Activated CD4-positive, alpha-beta T cell treated with anti-CD3 and anti-CD28 coated beads, Interleukin-2, amount 10 ng/mL, durations not matched to agents 7 days and 5 days (primary cell): ENCODE measurements at regions of chr9 and their contacts with region 1.

Region 1: DNA sequence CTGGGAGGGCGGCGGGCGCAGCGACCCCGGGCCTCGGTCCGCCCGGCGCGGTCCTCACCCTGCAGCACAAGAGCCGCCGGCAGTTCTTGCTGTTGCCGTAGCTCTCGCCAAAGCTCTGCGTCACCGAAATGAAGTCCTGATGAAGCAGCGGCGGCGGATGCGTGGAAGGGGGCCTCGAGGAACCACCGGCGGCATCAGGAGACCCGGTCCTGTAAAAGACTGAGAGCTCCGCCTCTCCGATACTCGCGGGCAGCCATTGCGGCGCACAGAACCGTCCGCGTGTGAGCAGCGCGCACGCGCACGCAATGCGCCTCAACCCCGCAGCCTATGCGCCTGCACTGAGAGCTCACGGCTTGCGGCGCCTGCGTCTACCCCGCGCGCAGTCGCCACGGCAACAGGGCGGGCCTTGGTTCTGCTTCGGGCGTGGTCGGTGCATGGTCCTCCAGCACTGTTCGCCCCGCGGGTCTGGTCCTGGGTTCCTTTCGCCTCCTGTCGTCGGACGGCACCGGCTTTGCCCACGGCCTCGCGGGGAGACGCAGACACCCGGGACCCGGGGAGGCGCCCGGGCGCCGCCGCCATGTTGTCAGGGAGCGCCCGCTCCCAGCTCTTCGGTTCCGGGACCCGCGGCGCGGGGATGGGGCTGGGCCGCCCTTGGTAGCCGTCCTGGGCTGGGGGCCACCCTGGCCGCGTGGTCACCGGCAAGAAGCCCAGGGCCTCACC is 9.3 kb upstream of the GRIN1 start:
- DNase-seq: peak; percentile 91
- H3K4me3 Mint-ChIP-seq: peak overlapping the region; percentile 77
- H3K27ac Mint-ChIP-seq: peak overlapping the region; percentile 87
- H3K4me1 Mint-ChIP-seq: peaks cover 30% of the 10 kb centered on the region
- H3K27me3 Mint-ChIP-seq: peaks cover 5% of the 10 kb centered on the region

Region 2: GRCh38 chr9:137150617-137151457 is 21.2 kb after region 1 on chr9:
- CTCF ChIA-PET with region 1: interaction called, 10 read pairs
- POLR2A ChIA-PET with region 1: no interaction called
- DNase-seq: peak; percentile 40
- H3K4me3 Mint-ChIP-seq: no peak overlapping the region
- H3K27ac Mint-ChIP-seq: no peak overlapping the region
- H3K4me1 Mint-ChIP-seq: peaks cover 4% of the 10 kb centered on the region
- H3K27me3 Mint-ChIP-seq: peaks cover 5% of the 10 kb centered on the region

Region 3: DNA sequence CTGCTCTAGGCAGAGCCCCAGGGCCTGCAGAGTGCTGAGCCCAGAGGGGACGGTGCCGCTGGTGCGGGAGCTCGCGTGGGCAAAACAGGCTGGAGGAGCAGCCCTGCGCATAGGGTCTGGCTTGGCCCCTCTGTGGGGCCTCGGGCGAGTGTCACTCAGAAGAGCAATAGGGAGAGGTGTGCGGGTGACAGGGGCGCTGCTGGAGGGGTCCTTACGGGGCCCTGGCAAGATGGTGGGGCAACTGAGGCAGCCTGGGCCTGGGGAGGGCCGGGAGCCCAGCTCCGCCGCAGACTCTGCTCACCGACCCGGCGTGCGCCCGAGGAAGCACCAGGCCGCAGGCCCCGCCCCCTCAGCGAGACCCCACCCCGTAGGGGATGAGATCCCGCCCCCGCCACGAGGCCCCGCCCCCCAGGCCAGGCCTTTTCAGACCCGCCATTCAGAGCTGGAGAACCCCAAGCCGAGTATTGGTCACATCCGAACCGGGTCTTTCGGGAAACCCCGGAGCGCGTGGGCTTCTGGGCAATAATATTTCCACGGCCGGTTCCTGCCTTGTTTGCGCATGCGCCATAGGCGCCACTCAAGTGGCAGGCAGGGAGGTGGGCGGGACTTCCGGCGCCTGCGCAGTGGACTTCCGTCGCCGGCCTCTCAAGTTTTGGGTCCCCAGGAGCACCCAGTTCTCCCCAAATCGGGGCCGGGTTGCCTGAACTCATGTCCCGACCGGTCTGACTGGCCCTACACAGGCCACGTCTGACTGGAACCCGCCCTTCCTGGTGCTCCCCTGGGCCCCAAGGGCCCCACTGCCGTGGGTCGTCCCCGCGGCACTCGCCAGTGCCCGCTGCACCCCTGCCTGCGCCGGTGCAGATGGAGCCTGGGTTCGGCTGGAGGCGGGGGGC is 93.7 kb after region 1 on chr9:
- CTCF ChIA-PET with region 1: interaction called, 10 read pairs
- POLR2A ChIA-PET with region 1: no interaction called
- DNase-seq: peak; percentile 99
- H3K4me3 Mint-ChIP-seq: peak overlapping the region; percentile 73
- H3K27ac Mint-ChIP-seq: peak overlapping the region; percentile 84
- H3K4me1 Mint-ChIP-seq: peaks cover 21% of the 10 kb centered on the region
- H3K27me3 Mint-ChIP-seq: peaks cover 2% of the 10 kb centered on the region